ENCODE measurements at regions of chr2 and their contacts with region 1.

Region 1: GRCh38 chr2:216412022-216412999 is at the start of gene SMARCAL1:
- DNase-seq: peak; percentile 96 to 98 (median 97)
- H3K4me3 ChIP-seq: peak within 1 kb of the TSS; percentile 73 to 89
- H3K4me3 Mint-ChIP-seq: peak within 1 kb of the TSS; percentile 97 to 98 (median 98)
- H3K27ac ChIP-seq: peak within 1 kb of the TSS; percentile 77
- H3K27ac Mint-ChIP-seq: peak within 1 kb of the TSS; percentile 89 to 97 (median 96)
- H3K4me1 ChIP-seq: peaks cover 16% of the 10 kb centered on the region
- H3K4me1 Mint-ChIP-seq: peaks cover 9 to 23% (median 16%) of the 10 kb centered on the region in 4 donors
- H3K27me3 ChIP-seq: peaks cover 3% of the 10 kb centered on the region
- H3K27me3 Mint-ChIP-seq: peaks cover 1 to 3% of the 10 kb centered on the region in 2 donors
- total RNA-seq, gene SMARCAL1: 26.1 to 26.3 TPM

Region 2: DNA sequence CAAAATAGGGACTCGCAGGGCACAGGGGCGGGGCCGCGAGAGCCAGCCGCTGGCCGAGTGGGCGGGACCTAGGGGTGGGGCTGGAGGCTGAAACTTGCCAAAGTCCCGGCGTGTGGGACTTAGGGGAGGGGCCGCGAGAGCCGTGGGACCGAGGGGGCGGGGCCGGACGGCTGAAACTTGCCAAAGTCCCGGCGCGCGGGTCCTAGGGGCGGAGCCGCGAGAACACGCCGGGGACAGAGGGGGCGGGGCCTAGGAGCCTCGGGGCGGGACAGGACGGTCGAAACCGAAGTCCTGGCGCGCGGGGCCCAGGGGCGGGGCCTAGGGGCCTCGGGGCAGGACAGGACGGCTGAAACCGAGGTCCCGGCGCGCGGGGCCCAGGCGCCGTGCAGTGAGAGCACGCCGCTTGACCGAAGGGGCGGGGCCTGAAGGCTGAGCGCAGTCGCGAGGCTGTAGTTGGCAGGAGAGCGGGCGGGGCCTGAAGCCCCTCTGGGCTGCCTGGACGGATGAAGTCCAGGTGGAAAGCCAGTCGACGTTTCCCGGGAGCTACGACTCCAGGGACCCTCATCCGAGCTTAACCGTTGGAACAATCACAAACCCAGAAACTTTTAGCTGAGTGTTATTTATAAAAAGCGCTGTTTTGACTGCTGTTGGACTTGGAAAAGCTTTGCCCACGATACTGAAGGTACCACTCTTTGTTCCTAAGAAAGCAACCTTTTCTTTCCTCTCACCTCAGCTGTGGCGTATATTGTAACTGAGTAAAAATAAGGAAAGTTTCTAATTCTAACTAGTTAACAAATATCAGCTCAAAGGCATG is 1602.4 kb before region 1 on chr2:
- CTCF ChIA-PET with region 1: no interaction called
- POLR2A ChIA-PET with region 1: no interaction called
- intact Hi-C with region 1: loop called (anchors 5 kb)
- DNase-seq: peak; percentile 91 to 94 (median 92)
- H3K4me3 ChIP-seq: peak overlapping the region; percentile 61 to 89
- H3K4me3 Mint-ChIP-seq: peak overlapping the region; percentile 90 to 99 (median 98)
- H3K27ac ChIP-seq: peak overlapping the region; percentile 60
- H3K27ac Mint-ChIP-seq: peak overlapping the region; percentile 65 to 91 (median 82)
- H3K4me1 ChIP-seq: peaks cover 32% of the 10 kb centered on the region
- H3K4me1 Mint-ChIP-seq: peaks cover 22 to 45% (median 30%) of the 10 kb centered on the region in 4 donors
- H3K27me3 ChIP-seq: no peaks in the 10 kb centered on the region
- H3K27me3 Mint-ChIP-seq: no peaks in the 10 kb centered on the region

Region 3: DNA sequence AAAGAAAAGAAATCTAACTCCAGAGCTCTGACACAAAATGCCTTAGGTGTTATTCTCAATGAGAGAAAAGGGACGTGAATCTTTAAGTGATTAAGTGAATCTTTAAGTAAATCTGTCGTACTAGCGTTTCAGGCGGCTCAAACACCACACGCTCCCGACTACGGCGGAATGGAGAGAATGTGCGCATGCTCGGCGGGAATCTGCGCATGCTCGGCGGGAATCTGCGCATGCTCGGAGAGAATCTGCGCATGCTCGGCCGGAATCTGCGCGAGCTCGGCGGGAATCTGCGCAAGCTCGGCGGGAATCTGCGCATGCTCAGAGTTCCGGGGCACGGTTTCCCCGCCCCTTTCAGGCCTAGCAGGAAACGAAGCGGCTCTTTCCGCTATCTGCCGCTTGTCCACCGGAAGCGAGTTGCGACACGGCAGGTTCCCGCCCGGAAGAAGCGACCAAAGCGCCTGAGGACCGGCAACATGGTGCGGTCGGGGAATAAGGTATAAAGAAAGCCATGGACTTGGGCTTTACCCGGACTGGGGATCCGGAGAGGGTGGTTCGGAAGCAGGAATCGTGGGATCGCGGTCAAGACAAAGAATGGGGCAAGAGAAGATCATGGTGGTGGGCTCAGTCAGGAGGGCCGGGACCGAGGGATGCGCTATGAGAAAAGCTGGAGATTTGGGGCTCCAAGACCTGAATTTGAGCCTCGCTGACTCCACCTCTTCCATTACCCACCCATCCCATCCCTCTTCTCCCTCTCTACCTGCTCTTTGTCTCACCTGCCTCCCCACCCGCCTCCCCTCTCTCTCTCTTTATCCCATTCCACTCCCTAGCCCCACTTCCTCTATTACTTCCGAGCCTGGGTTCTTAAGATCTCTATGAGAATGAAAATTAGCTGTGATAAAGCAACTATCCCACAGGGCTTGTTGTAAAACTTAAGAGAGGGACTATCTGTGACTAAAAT is 303.1 kb before region 1 on chr2 and contains the start of gene XRCC5:
- CTCF ChIA-PET with region 1: interaction called, 6 read pairs
- POLR2A ChIA-PET with region 1: interaction called, 5 read pairs
- intact Hi-C with region 1: loop called (anchors 1 kb)
- DNase-seq: peak; percentile 95 to 98 (median 96)
- H3K4me3 ChIP-seq: peak within 1 kb of the TSS; percentile 94 to 95
- H3K4me3 Mint-ChIP-seq: peak within 1 kb of the TSS; percentile 99 to 100 (median 100)
- H3K27ac ChIP-seq: peak within 1 kb of the TSS; percentile 98
- H3K27ac Mint-ChIP-seq: peak within 1 kb of the TSS; percentile 99 to 100 (median 100)
- H3K4me1 ChIP-seq: peaks cover 51% of the 10 kb centered on the region
- H3K4me1 Mint-ChIP-seq: peaks cover 36 to 61% (median 49%) of the 10 kb centered on the region in 4 donors
- H3K27me3 ChIP-seq: no peaks in the 10 kb centered on the region
- H3K27me3 Mint-ChIP-seq: peaks cover 2 to 3% of the 10 kb centered on the region in 2 donors
- total RNA-seq, gene XRCC5: 235 to 240 TPM

Region 4: GRCh38 chr2:216215658-216216390 is 196.5 kb before region 1 on chr2:
- CTCF ChIA-PET with region 1: no interaction called
- POLR2A ChIA-PET with region 1: no interaction called
- intact Hi-C with region 1: no loop called
- DNase-seq: no peak
- H3K4me3 ChIP-seq: no peak overlapping the region
- H3K4me3 Mint-ChIP-seq: no peak overlapping the region
- H3K27ac ChIP-seq: no peak overlapping the region
- H3K27ac Mint-ChIP-seq: no peak overlapping the region
- H3K4me1 ChIP-seq: peaks cover 10% of the 10 kb centered on the region
- H3K4me1 Mint-ChIP-seq: peaks cover 13 to 31% (median 21%) of the 10 kb centered on the region in 4 donors
- H3K27me3 ChIP-seq: no peaks in the 10 kb centered on the region
- H3K27me3 Mint-ChIP-seq: no peaks in the 10 kb centered on the region

Region 5: GRCh38 chr2:216350214-216350789 is 62.0 kb before region 1 on chr2:
- CTCF ChIA-PET with region 1: interaction called, 4 read pairs
- POLR2A ChIA-PET with region 1: interaction called, 11 read pairs
- intact Hi-C with region 1: loop called (anchors 2 kb)
- DNase-seq: peak; percentile 19 to 57 (median 27)
- H3K4me3 ChIP-seq: no peak overlapping the region
- H3K4me3 Mint-ChIP-seq: peak overlapping the region in 7 of 8 donors; percentile 7 to 82 (median 37)
- H3K27ac ChIP-seq: no peak overlapping the region
- H3K27ac Mint-ChIP-seq: peak overlapping the region; percentile 25 to 88 (median 72)
- H3K4me1 ChIP-seq: peaks cover 79% of the 10 kb centered on the region
- H3K4me1 Mint-ChIP-seq: peaks cover 67 to 80% (median 73%) of the 10 kb centered on the region in 4 donors
- H3K27me3 ChIP-seq: no peaks in the 10 kb centered on the region
- H3K27me3 Mint-ChIP-seq: no peaks in the 10 kb centered on the region

Region 6: GRCh38 chr2:216436383-216436782 is 24.1 kb after region 1 on chr2:
- CTCF ChIA-PET with region 1: no interaction called
- POLR2A ChIA-PET with region 1: no interaction called
- intact Hi-C with region 1: no loop called
- DNase-seq: no peak
- H3K4me3 ChIP-seq: no peak overlapping the region
- H3K4me3 Mint-ChIP-seq: no peak overlapping the region
- H3K27ac ChIP-seq: no peak overlapping the region
- H3K27ac Mint-ChIP-seq: no peak overlapping the region
- H3K4me1 ChIP-seq: no peaks in the 10 kb centered on the region
- H3K4me1 Mint-ChIP-seq: no peaks in the 10 kb centered on the region
- H3K27me3 ChIP-seq: no peaks in the 10 kb centered on the region
- H3K27me3 Mint-ChIP-seq: no peaks in the 10 kb centered on the region

Region 7: GRCh38 chr2:216498418-216499413 is 86.4 kb after region 1 on chr2 and contains the start of gene RPL37A:
- CTCF ChIA-PET with region 1: interaction called, 3 read pairs
- POLR2A ChIA-PET with region 1: interaction called, 9 read pairs
- intact Hi-C with region 1: loop called (anchors 1 kb)
- DNase-seq: peak; percentile 88 to 90 (median 90)
- H3K4me3 ChIP-seq: peak within 1 kb of the TSS; percentile 88 to 98
- H3K4me3 Mint-ChIP-seq: peak within 1 kb of the TSS; percentile 94 to 100 (median 99)
- H3K27ac ChIP-seq: peak within 1 kb of the TSS; percentile 88
- H3K27ac Mint-ChIP-seq: peak within 1 kb of the TSS; percentile 93 to 99 (median 97)
- H3K4me1 ChIP-seq: peaks cover 50% of the 10 kb centered on the region
- H3K4me1 Mint-ChIP-seq: peaks cover 36 to 58% (median 42%) of the 10 kb centered on the region in 4 donors
- H3K27me3 ChIP-seq: no peaks in the 10 kb centered on the region
- H3K27me3 Mint-ChIP-seq: no peaks in the 10 kb centered on the region
- total RNA-seq, gene RPL37A: 3,034 to 3,213 TPM

Measured in CD4-positive, alpha-beta memory T cell (primary cell).